Activated T-helper 1 cell treated with anti-CD3 and anti-CD28 coated beads, Interleukin-12 subunit alpha, Interleukin-12 subunit beta, Interleukin-2, Interleukin-4 antibody, amounts not matched to agents 30 ng/mL and 10 ng/mL and 1 ng/mL, durations not matched to agents 14 hours and 24 hours and 36 hours (primary cell): ENCODE measurements at regions of chr2 and their contacts with region 1.

Region 1: GRCh38 chr2:88600038-88600465 is 27.2 kb downstream of the EIF2AK3 start:
- DNase-seq: peak; percentile 58
- H3K4me3 Mint-ChIP-seq: no peak overlapping the region
- H3K27ac Mint-ChIP-seq: peak overlapping the region; percentile 64
- H3K4me1 Mint-ChIP-seq: peaks cover 49% of the 10 kb centered on the region
- H3K27me3 Mint-ChIP-seq: no peaks in the 10 kb centered on the region

Region 2: GRCh38 chr2:88615822-88616221 is 15.8 kb after region 1 on chr2:
- intact Hi-C with region 1: loop called (anchors 1 kb)
- DNase-seq: no peak
- H3K4me3 Mint-ChIP-seq: no peak overlapping the region
- H3K27ac Mint-ChIP-seq: no peak overlapping the region
- H3K4me1 Mint-ChIP-seq: peaks cover 21% of the 10 kb centered on the region
- H3K27me3 Mint-ChIP-seq: no peaks in the 10 kb centered on the region

Region 3: DNA sequence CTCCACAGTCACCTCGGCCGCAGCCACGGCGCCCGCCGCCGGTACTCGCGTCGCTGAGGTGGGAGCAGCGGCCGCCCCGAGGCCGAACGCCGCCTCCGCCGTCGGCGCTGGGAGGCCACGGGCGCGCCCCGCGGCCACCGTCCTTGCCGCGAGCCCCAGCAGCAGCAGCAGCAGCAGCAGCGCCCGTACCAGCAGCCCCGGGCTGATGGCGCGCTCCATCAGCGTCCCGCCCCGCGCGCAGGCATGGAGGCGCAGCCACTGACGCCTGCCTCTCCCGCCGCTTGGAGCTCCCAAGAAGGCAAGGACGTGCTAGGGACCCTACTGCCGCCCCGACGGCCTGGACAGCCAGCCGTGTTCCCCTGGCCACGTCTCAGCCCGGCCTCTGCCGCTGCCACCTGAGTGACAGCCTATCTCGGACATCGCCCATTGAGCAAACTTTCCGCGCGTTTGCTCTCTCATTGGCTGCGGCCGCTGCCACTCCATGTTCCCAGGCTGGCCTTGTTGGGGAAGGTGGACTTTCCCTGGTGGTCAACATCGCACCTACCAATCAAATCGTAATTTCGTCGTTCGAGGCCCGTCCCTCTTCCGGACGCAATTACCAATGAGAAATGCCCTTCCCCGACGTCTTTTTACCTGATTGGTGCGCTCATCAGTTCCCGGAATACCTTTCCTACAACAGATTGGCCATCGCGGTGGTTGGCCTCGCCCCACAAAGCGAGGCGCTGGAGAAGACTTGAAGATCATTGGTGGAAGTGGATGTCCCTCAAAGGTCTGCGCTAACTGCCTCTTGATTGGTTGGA is 27.2 kb after region 1 on chr2 and contains the start of gene EIF2AK3:
- intact Hi-C with region 1: loop called (anchors 1 kb)
- DNase-seq: peak; percentile 96
- H3K4me3 Mint-ChIP-seq: peak within 1 kb of the TSS; percentile 94
- H3K27ac Mint-ChIP-seq: peak within 1 kb of the TSS; percentile 88
- H3K4me1 Mint-ChIP-seq: peaks cover 5% of the 10 kb centered on the region
- H3K27me3 Mint-ChIP-seq: no peaks in the 10 kb centered on the region
- total RNA-seq, gene EIF2AK3: 28.7 and 29.6 TPM in 2 replicates

Region 4: DNA sequence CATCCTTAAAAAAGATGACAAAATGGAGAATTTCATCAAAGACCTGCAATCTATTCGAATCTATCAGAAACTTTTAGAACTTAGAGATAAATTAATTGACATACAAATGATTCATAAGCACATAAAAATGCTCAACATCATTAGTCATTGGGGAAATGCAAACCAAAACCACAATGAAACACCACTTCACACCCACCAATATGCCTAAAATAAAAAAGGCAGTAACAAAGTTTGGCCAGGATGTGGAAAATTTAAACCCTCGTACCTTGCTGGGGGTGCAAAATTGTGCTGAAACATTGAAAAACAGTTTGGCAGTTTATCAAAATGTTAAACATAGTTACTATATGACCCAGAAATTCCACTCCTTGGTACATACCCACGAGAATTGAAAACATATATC is 38.7 kb after region 1 on chr2:
- intact Hi-C with region 1: loop called (anchors 1 kb)
- DNase-seq: peak; percentile 19
- H3K4me3 Mint-ChIP-seq: no peak overlapping the region
- H3K27ac Mint-ChIP-seq: peak overlapping the region; percentile 82
- H3K4me1 Mint-ChIP-seq: peaks cover 65% of the 10 kb centered on the region
- H3K27me3 Mint-ChIP-seq: no peaks in the 10 kb centered on the region

Region 5: DNA sequence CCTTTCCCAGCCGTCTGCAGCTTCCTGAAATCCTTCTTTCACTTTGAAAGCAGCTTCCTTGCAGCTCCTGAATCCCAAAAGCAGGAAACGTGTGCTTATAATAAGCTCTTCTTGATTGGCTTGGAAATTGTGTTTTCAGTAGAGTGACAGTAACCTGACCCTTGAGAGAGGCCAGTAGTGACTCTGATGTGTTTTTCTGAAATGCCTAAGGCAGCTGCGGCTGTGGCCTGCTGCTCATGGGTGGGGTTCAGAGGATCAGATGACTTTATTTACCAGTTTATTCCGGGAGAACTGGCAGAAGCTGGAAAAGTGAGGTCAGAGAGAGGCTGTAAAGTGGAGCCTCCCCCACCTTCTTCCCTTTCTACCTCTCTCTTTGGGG is 59.5 kb after region 1 on chr2:
- intact Hi-C with region 1: no loop called
- DNase-seq: no peak
- H3K4me3 Mint-ChIP-seq: no peak overlapping the region
- H3K27ac Mint-ChIP-seq: no peak overlapping the region
- H3K4me1 Mint-ChIP-seq: no peaks in the 10 kb centered on the region
- H3K27me3 Mint-ChIP-seq: peaks cover 2% of the 10 kb centered on the region

Region 6: GRCh38 chr2:88691339-88692183 is 91.5 kb after region 1 on chr2 and contains the start of gene RPIA:
- intact Hi-C with region 1: loop called (anchors 1 kb)
- DNase-seq: peak; percentile 98
- H3K4me3 Mint-ChIP-seq: peak within 1 kb of the TSS; percentile 96
- H3K27ac Mint-ChIP-seq: peak within 1 kb of the TSS; percentile 91
- H3K4me1 Mint-ChIP-seq: peaks cover 41% of the 10 kb centered on the region
- H3K27me3 Mint-ChIP-seq: no peaks in the 10 kb centered on the region
- total RNA-seq, gene RPIA: 79.1 and 83.1 TPM in 2 replicates